Common myeloid progenitor, CD34-positive (primary cell): ENCODE measurements at regions of chr16 and their contacts with region 1.

Region 1: DNA sequence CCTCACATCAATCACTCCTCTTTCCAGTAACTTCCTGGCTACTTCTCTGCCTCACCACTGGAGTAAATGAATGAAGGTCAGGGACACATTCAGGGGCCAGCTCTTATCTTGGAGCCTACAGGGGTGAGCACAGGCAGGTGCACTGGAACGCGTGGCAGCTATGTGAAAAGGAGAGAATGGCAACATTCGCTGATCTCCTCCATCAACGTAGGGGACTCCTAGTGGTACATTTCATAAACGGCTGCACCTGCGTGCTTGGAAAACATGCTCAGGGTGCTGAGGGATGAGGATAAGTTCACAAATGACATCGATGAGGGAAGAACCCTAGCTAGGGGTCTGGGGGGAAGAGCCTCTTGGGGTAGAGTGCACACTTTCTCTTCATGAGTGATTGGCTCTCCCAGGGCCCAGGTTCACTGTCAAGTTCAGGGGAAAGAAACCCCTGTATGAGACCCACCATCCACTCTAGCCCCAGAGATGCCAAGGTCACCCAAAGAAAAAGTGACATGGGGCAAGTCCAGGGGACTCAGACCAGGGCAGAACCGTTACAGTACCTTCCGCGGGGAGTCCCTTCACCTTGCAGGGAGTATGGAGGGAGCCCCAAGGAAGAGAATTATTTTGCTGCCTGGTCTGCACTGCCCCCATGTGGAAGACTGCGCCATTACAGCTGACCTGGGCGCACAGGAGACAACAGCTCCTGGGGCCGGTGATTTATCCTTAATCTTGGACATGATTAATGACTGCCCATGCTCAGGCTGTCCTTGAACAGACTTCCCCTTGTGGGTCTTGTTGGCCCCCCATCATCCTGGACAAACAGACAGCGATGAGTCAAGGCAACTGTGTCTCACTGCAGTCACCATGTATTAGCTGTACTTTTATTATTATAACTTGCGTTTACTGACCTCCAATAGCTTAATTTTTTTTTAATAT is 30.1 kb downstream of the VAC14 start:
- DNase-seq: peak; percentile 40 to 70 (median 69)
- H3K4me3 ChIP-seq: peak overlapping the region in 1 of 7 experiments; percentile 11
- H3K27ac ChIP-seq: no peak overlapping the region
- H3K4me1 ChIP-seq: peaks cover 0 to 4% (median 0%) of the 10 kb centered on the region in 4 experiments
- H3K27me3 ChIP-seq: no peaks in the 10 kb centered on the region

Region 2: DNA sequence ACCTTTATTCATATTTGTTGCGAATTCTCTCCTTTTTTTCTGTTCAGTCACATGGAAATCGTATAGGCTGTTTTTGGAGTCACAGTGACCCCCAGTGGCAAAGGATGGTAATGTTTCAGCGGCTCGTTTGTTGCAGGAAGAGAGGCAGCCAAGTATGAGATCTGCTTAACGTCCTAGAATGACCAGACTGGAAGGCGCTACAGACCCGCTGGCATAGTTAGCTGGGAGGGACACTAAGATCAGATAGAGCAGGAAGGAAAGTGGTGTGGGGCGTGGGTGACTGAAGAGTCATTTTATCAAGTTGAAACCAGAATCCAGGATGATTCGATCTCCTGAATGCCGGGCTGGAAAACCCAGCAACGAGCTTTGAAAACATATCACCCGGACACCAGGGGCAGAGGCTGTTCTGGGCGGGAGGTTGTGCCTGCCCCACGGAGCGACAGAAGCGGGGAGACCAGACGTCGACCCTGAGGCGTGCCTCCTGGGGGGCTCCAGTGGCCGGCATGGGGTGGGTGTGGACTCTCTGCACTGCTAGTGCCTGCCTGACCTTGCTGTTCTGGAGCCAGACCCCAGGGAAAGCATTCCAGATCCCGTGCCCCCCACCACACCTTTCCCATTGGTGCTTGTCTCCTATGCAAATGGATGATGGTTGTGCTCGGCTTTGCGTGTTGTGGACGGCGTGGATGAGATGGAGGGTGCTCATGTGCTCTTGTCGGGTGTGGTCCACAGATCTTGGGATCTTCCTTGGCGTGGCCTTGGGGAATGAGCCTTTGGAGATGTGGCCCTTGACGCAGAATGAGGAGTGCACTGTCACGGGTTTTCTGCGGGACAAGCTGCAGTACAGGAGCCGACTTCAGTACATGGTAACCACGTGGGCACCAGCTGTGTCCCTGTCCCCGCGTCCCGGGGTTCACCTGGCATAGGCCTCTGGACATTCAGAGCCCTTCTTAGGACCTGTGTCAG is 116.8 kb before region 1 on chr16:
- CTCF ChIA-PET with region 1: interaction called, 20 read pairs
- POLR2A ChIA-PET with region 1: no interaction called
- DNase-seq: peak; percentile 77 to 90 (median 85)
- H3K4me3 ChIP-seq: peak overlapping the region in 4 of 7 experiments; percentile 8 to 75 (median 51)
- H3K27ac ChIP-seq: no peak overlapping the region
- H3K4me1 ChIP-seq: peaks cover 0 to 5% (median 3%) of the 10 kb centered on the region in 4 experiments
- H3K27me3 ChIP-seq: no peaks in the 10 kb centered on the region

Region 3: GRCh38 chr16:70660672-70661350 is 110.1 kb before region 1 on chr16:
- CTCF ChIA-PET with region 1: interaction called, 20 read pairs
- POLR2A ChIA-PET with region 1: interaction called, 3 read pairs
- DNase-seq: no peak
- H3K4me3 ChIP-seq: no peak overlapping the region
- H3K27ac ChIP-seq: no peak overlapping the region
- H3K4me1 ChIP-seq: no peaks in the 10 kb centered on the region
- H3K27me3 ChIP-seq: no peaks in the 10 kb centered on the region

Region 4: GRCh38 chr16:70679666-70680494 is 91.0 kb before region 1 on chr16:
- CTCF ChIA-PET with region 1: interaction called, 97 read pairs
- POLR2A ChIA-PET with region 1: no interaction called
- DNase-seq: peak in 2 of 3 donors; percentile 23
- H3K4me3 ChIP-seq: no peak overlapping the region
- H3K27ac ChIP-seq: no peak overlapping the region
- H3K4me1 ChIP-seq: peaks cover 0 to 19% (median 18%) of the 10 kb centered on the region in 4 experiments
- H3K27me3 ChIP-seq: no peaks in the 10 kb centered on the region

Region 5: DNA sequence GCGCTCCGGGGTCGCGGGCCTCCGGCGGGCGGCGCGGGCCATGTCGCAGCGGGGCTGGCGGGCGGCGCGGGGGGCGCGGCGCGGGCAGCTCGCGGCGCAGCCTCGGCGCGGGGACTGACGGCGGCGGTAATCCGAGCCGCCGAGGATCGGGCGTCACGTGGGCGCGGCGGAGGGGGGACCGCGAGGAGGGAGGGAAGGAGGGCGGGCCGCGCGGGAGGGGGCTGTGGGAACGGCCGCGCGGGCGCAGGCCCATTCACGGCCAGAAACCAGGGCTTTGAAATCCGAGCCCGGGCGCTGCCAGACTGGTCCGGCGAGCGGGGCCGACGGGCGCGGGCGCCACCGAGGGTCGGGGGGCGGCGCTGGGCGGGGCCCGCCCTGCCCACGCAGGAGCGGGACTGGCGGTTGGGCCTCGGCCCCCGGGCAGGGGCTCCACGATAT is 84.9 kb before region 1 on chr16 and contains the start of gene MTSS2:
- CTCF ChIA-PET with region 1: interaction called, 97 read pairs
- POLR2A ChIA-PET with region 1: no interaction called
- DNase-seq: peak; percentile 65 to 86 (median 79)
- H3K4me3 ChIP-seq: peak within 1 kb of the TSS; percentile 15 to 80 (median 71)
- H3K27ac ChIP-seq: no peak within 1 kb of the TSS
- H3K4me1 ChIP-seq: peaks cover 0 to 47% (median 34%) of the 10 kb centered on the region in 4 experiments
- H3K27me3 ChIP-seq: no peaks in the 10 kb centered on the region

Region 6: GRCh38 chr16:70750893-70751475 is 19.9 kb before region 1 on chr16:
- CTCF ChIA-PET with region 1: interaction called, 27 read pairs
- POLR2A ChIA-PET with region 1: no interaction called
- DNase-seq: peak in 2 of 3 donors; percentile 72 to 77
- H3K4me3 ChIP-seq: peak overlapping the region in 1 of 7 experiments; percentile 27
- H3K27ac ChIP-seq: peak overlapping the region; percentile 27 to 50
- H3K4me1 ChIP-seq: peaks cover 0 to 59% (median 48%) of the 10 kb centered on the region in 4 experiments
- H3K27me3 ChIP-seq: no peaks in the 10 kb centered on the region